ENCODE measurements at regions of chr17 and their contacts with region 1.

Region 1: DNA sequence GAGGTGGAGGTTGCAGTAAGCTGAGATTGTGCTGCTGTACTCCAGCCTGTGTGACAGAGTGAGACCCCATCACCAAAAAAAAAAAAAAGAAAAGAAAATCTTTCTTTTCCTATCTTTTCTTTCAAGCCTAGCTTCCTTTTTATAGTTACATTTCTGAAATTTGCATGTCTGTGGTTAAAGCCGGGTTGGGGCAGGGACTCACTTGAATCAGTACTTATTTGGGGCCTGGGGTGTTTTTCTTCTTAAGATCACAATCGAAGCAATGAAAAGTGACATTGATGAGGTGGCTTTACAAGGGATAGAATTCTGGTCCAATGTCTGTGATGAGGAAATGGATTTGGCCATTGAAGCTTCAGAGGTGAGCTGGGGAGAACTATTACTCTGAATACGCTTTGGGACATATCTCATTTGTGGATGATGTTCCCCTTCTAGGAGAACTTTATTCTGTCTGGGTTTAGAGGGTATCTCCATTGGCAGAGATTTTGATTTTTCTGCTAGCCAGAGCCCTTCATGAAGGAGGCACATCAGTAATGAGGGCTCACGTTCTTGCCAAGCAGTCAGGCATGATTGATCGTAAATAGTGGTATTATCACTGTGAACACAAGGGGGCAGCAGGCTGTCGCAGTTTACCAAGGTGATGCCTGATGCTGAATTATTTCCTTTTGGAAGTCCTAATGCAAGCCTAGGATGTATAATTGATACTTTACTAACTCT is 14.3 kb downstream of the KPNB1 start:
- DNase-seq: peak; percentile 80
- H3K4me3 Mint-ChIP-seq: no peak overlapping the region
- H3K27ac Mint-ChIP-seq: peak overlapping the region; percentile 87
- H3K4me1 Mint-ChIP-seq: peaks cover 41% of the 10 kb centered on the region
- H3K27me3 Mint-ChIP-seq: no peaks in the 10 kb centered on the region

Region 2: DNA sequence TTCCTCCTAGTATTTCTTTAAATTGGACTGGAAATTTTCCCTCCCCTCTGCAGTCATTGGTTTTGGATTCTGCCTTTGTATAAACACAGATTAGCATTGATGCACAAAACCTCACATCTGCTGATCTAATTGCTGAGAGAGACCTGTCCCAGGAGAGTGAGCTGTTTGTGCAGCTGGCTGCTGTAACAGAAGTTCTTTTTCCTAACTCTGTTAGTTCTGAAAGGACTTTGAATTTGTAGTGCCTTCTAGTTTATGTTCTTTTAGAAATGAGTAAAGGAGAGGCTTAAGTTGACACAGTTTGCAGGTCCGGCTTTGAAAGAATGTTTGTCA is 59.5 kb before region 1 on chr17:
- CTCF ChIA-PET with region 1: no interaction called
- intact Hi-C with region 1: no loop called
- DNase-seq: no peak
- H3K4me3 Mint-ChIP-seq: no peak overlapping the region
- H3K27ac Mint-ChIP-seq: no peak overlapping the region
- H3K4me1 Mint-ChIP-seq: no peaks in the 10 kb centered on the region
- H3K27me3 Mint-ChIP-seq: no peaks in the 10 kb centered on the region

Region 3: DNA sequence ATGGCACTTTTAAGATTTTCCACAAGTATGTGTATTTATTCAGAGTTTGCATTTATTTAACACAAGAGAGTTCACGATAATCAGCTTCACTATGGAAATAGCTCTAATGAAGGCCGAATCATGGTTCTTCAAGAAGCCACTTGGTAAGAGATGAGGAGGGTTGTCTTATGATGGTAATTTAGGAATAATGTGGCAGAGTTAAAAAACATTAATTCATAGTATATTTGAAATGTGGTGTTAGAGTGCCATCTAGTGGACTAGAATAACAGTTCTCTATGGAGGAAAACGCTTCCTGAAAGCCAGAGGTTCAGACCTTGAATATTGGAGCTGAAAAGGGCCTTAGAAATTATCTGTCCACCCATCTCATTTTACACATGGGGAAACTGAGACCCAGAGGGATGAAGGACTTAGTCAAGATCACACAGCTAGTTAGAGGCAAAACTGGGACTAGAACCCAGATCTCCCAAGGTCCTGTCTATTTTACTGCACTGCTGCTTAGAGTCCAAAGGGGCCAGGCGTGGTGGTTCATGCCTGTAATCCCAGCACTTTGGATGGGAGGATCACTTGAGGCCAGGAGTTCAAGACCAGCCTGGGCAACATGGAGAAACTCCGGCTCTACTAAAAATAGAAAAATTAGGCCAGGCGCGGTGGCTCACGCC is 48.2 kb before region 1 on chr17:
- CTCF ChIA-PET with region 1: interaction called, 12 read pairs
- intact Hi-C with region 1: no loop called
- DNase-seq: no peak
- H3K4me3 Mint-ChIP-seq: no peak overlapping the region
- H3K27ac Mint-ChIP-seq: no peak overlapping the region
- H3K4me1 Mint-ChIP-seq: peaks cover 11% of the 10 kb centered on the region
- H3K27me3 Mint-ChIP-seq: no peaks in the 10 kb centered on the region

Region 4: GRCh38 chr17:47687748-47688147 is 23.7 kb after region 1 on chr17:
- CTCF ChIA-PET with region 1: interaction called, 13 read pairs
- intact Hi-C with region 1: no loop called
- DNase-seq: no peak
- H3K4me3 Mint-ChIP-seq: no peak overlapping the region
- H3K27ac Mint-ChIP-seq: no peak overlapping the region
- H3K4me1 Mint-ChIP-seq: peaks cover 31% of the 10 kb centered on the region
- H3K27me3 Mint-ChIP-seq: no peaks in the 10 kb centered on the region

Region 5: DNA sequence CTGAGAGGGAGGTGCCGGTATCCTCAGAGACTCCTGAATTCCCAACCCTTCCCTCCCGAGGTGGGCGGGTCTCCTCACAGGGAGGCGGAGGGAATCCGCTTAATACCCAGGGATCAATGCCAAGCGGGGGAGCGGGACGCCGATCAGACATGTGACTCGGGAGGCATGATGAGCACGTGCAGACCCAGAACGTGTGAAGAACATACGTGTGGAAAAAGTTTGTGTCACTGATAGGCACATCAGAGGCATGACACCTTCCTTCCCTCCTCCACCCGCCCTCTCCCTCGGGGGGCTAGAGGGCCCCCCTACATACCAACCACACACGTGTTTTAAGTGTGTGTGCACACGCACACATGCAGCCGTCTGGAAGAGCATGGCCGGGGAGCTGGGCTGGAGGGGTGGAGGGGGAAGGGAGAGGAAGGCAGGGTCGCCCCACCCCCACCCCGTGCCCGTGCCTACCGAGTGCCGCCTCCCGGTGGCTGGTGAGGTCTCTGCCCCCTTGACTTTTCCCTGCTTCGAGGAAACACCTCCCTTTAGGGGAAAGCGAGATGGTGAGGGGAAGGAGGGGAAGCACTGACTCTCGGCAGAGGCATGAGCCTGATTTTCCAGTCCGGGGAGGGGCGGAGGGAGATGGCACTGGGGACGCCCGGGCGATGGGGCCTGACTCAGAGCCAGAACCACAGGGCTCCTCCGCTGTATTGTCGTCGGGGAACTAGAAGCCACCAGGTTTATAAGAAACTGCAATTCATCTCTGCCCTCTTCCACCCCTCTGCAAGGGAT is 56.9 kb after region 1 on chr17:
- CTCF ChIA-PET with region 1: no interaction called
- intact Hi-C with region 1: loop called (anchors 1 kb)
- DNase-seq: peak; percentile 100
- H3K4me3 Mint-ChIP-seq: peak overlapping the region; percentile 62
- H3K27ac Mint-ChIP-seq: peak overlapping the region; percentile 100
- H3K4me1 Mint-ChIP-seq: peaks cover 96% of the 10 kb centered on the region
- H3K27me3 Mint-ChIP-seq: no peaks in the 10 kb centered on the region

Region 6: DNA sequence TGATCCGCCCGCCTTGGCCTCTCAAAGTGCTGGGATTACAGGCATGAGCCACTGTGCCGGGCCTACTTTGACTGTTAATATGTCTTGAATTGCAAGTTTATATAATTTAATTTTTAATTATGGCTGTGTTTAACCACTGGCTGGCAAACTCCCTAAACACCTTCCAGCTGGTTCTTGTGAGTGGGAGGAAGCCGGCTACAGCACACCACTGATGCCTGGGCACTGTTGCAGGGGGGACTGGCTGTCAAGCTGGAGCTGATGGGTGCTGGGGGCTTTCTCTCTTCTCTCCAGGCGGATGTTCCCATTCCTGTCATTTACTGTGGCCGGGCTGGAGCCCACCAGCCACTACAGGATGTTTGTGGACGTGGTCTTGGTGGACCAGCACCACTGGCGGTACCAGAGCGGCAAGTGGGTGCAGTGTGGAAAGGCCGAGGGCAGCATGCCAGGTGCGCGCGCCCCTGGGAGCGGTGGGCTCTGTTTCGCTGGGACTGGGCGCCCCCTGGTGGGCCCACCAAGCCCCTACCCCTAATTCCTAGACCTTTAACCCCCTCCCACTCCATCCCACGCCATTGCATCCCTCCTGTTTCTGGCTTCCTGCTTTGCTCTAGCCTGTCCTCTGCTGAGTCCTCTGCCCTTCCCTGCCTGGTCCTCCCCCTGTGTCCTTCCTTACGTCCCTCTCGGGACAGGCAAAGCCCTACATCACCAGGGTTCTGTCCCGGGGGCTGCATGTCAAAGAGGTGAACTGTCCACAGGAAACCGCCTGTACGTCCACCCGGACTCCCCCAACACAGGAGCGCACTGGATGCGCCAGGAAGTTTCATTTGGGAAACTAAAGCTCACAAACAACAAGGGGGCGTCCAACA is 78.5 kb after region 1 on chr17:
- CTCF ChIA-PET with region 1: interaction called, 4 read pairs
- intact Hi-C with region 1: loop called (anchors 1 kb)
- DNase-seq: peak; percentile 53
- H3K4me3 Mint-ChIP-seq: peak overlapping the region; percentile 45
- H3K27ac Mint-ChIP-seq: no peak overlapping the region
- H3K4me1 Mint-ChIP-seq: peaks cover 46% of the 10 kb centered on the region
- H3K27me3 Mint-ChIP-seq: no peaks in the 10 kb centered on the region

Measured in activated naive CD4-positive, alpha-beta T cell treated with anti-CD3 and anti-CD28 coated beads for 36 hours (primary cell).